ENCODE measurements at regions of chr5 and their contacts with region 1.

Region 1: GRCh38 chr5:176388444-176389134 is at the starts of genes HIGD2A and NOP16:
- DNase-seq: peak; percentile 100
- H3K4me3 Mint-ChIP-seq: peak within 1 kb of the TSS; percentile 98
- H3K27ac Mint-ChIP-seq: peak within 1 kb of the TSS; percentile 99
- H3K4me1 Mint-ChIP-seq: peaks cover 22% of the 10 kb centered on the region
- H3K27me3 Mint-ChIP-seq: no peaks in the 10 kb centered on the region
- CTCF ChIP-seq: no peak
- total RNA-seq, gene HIGD2A: 167 and 196 TPM in 2 replicates
- total RNA-seq, gene NOP16: 90.9 and 134 TPM in 2 replicates

Region 2: GRCh38 chr5:175809531-175810121 is 579.0 kb before region 1 on chr5:
- CTCF ChIA-PET with region 1: no interaction called
- POLR2A ChIA-PET with region 1: no interaction called
- intact Hi-C with region 1: loop called (anchors 10 kb)
- DNase-seq: peak; percentile 88
- H3K4me3 Mint-ChIP-seq: no peak overlapping the region
- H3K27ac Mint-ChIP-seq: no peak overlapping the region
- H3K4me1 Mint-ChIP-seq: peaks cover 40% of the 10 kb centered on the region
- H3K27me3 Mint-ChIP-seq: peaks cover 29% of the 10 kb centered on the region
- CTCF ChIP-seq: no peak

Region 3: GRCh38 chr5:176361437-176362232 is 27.0 kb before region 1 on chr5 and contains the start of gene KIAA1191:
- CTCF ChIA-PET with region 1: interaction called, 4 read pairs
- POLR2A ChIA-PET with region 1: interaction called, 51 read pairs
- intact Hi-C with region 1: no loop called
- DNase-seq: peak; percentile 94
- H3K4me3 Mint-ChIP-seq: peak within 1 kb of the TSS; percentile 98
- H3K27ac Mint-ChIP-seq: peak within 1 kb of the TSS; percentile 97
- H3K4me1 Mint-ChIP-seq: peaks cover 18% of the 10 kb centered on the region
- H3K27me3 Mint-ChIP-seq: no peaks in the 10 kb centered on the region
- CTCF ChIP-seq: peak; percentile 25
- total RNA-seq, gene KIAA1191: 83.8 and 92.0 TPM in 2 replicates

Region 4: DNA sequence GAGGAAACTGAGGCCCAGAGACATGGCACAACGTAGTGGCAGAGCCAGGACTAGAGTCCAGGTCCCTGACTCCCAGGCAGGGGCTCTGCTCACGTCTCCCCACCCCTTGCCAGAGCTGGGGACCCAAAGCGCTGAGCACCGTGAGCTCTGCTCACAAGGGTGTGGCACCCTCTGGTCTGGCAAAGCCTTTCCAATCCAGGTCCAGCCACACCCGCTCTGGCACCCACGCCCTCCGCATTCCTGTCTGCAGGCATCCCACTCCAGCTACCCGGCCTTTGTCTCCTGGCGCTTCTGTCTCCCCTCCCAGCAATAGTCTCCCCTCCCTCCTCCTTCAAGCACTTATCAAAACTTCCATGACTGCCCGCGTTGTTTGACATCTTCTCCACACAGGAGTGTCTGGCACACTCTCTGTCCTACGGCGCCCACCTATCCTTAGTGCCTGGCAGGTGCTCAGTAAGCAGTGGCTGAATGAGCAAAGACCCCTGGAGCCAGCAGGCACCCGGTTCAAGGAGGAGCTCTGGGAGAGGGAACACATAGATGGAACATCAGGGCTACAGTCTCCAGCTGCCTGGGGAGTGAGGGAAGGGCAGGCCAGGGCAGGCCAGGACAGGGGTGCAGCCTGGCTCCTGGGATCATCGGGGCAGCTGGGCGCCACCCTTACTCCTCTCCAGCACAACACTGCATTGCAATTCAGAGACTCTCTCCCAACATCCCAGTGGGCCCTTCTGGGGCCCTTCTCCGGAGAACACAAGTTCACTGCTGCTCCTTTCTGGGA is 12.0 kb after region 1 on chr5:
- CTCF ChIA-PET with region 1: interaction called, 3 read pairs
- POLR2A ChIA-PET with region 1: interaction called, 74 read pairs
- intact Hi-C with region 1: no loop called
- DNase-seq: peak; percentile 48
- H3K4me3 Mint-ChIP-seq: peak overlapping the region; percentile 38
- H3K27ac Mint-ChIP-seq: peak overlapping the region; percentile 78
- H3K4me1 Mint-ChIP-seq: peaks cover 29% of the 10 kb centered on the region
- H3K27me3 Mint-ChIP-seq: no peaks in the 10 kb centered on the region
- CTCF ChIP-seq: no peak